Dendritic cell treated with granulocyte-macrophage colony-stimulating factor and Interleukin-4, amounts not matched to agents 40 ng/mL and 50 ng/mL, for 4 days (primary cell): ENCODE measurements at regions of chr5 and their contacts with region 1.

Region 1: GRCh38 chr5:90409318-90410177 is at the start of gene CETN3:
- H3K4me3 Mint-ChIP-seq: no peak within 1 kb of the TSS
- H3K27ac Mint-ChIP-seq: no peak within 1 kb of the TSS
- H3K4me1 Mint-ChIP-seq: peaks cover 15% of the 10 kb centered on the region
- H3K27me3 Mint-ChIP-seq: peaks cover 1% of the 10 kb centered on the region

Region 2: DNA sequence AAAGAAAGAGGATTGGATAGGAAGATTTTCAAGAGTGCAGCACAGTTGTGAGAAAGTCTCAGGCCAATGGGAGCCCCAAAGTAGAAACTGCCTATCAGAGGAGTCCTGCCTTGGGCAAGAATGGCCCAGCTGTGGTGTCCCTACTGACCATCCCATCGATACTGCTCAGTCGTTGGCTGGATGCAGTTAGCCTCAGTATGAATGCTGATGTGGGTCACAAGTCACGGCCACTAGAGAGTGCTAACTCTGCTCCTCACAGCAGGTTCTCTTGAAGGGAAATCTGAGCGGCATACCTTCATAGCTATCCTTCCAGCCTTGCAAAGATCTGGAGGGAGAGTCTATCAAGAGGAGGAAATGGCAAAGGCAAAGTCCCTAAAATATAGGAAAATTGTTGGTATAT is 11.6 kb after region 1 on chr5:
- intact Hi-C with region 1: no loop called
- H3K4me3 Mint-ChIP-seq: no peak overlapping the region
- H3K27ac Mint-ChIP-seq: no peak overlapping the region
- H3K4me1 Mint-ChIP-seq: no peaks in the 10 kb centered on the region
- H3K27me3 Mint-ChIP-seq: peaks cover 5% of the 10 kb centered on the region

Region 3: GRCh38 chr5:90474235-90475109 is 64.9 kb after region 1 on chr5 and contains the starts of genes MBLAC2 and POLR3G:
- intact Hi-C with region 1: loop called (anchors 1 kb)
- H3K4me3 Mint-ChIP-seq: peak within 1 kb of the TSS; percentile 99
- H3K27ac Mint-ChIP-seq: peak within 1 kb of the TSS; percentile 88
- H3K4me1 Mint-ChIP-seq: peaks cover 16% of the 10 kb centered on the region
- H3K27me3 Mint-ChIP-seq: peaks cover 9% of the 10 kb centered on the region

Region 4: GRCh38 chr5:91024727-91025126 is 615.2 kb after region 1 on chr5:
- intact Hi-C with region 1: no loop called
- H3K4me3 Mint-ChIP-seq: no peak overlapping the region
- H3K27ac Mint-ChIP-seq: no peak overlapping the region
- H3K4me1 Mint-ChIP-seq: no peaks in the 10 kb centered on the region
- H3K27me3 Mint-ChIP-seq: no peaks in the 10 kb centered on the region